Breast epithelium (tissue), 4 donors: ENCODE measurements at regions of chr2 and their contacts with region 1.

Region 1: DNA sequence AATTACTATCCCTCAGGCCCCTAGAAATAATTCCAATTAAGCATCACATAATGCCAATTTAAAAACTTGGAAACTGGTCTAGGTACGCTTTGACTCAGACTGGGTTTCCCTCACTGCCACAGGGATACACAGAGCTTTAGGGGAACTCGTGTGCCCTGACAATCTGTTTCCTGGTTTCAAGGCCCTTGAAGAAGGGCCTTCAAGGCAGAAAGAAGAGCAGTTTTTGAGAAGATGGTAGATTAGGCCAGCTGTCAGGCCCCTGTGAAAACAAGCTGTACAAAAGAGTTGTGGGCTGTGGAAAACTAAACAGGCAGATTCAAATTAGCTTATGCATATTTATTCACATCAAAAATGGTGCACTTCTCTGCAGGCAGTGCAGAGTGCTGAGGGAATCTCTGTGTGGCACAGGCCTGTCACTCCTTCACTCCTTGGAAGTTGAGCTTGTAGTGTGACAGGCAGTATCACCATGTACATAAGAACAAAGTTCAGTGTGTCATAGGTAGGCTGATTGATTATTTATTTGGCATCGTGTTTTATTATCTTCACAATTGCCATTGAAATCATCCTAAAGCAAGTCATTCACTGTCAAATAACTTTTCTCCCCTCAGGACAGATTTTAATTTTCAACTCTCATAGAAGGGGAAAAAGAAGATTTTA is 614.4 kb upstream of the GYPC start:
- DNase-seq: no peak
- H3K4me3 ChIP-seq: no peak overlapping the region
- H3K27ac ChIP-seq: no peak overlapping the region
- H3K4me1 ChIP-seq: no peaks in the 10 kb centered on the region
- H3K27me3 ChIP-seq: no peaks in the 10 kb centered on the region
- CTCF ChIP-seq: no peak
- POLR2A ChIP-seq: no peak

Region 2: GRCh38 chr2:126085011-126085795 is 43.7 kb after region 1 on chr2:
- intact Hi-C with region 1: loop called (anchors 2 kb)
- DNase-seq: no peak
- H3K4me3 ChIP-seq: no peak overlapping the region
- H3K27ac ChIP-seq: no peak overlapping the region
- H3K4me1 ChIP-seq: no peaks in the 10 kb centered on the region
- H3K27me3 ChIP-seq: no peaks in the 10 kb centered on the region
- CTCF ChIP-seq: no peak
- POLR2A ChIP-seq: no peak

Region 3: DNA sequence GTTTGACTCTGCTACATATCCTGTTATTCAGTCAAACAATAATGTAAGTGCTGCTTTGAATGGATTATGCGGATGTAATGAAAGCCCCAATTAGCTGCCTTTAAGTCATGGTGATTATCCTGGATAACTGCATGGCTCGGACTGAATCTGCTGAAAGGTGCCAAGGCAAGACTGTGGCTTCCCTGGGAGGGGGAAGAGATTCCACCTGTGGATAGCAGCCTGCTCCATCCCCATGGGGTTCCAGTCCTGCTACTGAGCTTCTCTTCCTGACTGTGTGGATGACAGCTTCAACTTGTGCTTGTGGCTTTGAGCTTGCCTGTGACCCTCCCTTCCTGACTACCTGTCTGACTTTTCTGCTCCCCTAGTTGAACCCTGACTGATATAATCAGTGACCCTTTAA is 74.5 kb after region 1 on chr2:
- intact Hi-C with region 1: no loop called
- DNase-seq: no peak
- H3K4me3 ChIP-seq: no peak overlapping the region
- H3K27ac ChIP-seq: no peak overlapping the region
- H3K4me1 ChIP-seq: no peaks in the 10 kb centered on the region
- H3K27me3 ChIP-seq: no peaks in the 10 kb centered on the region
- CTCF ChIP-seq: no peak
- POLR2A ChIP-seq: no peak